Psoas muscle (tissue), 8 donors: ENCODE measurements at regions of chr1 and their contacts with region 1.

Region 1: DNA sequence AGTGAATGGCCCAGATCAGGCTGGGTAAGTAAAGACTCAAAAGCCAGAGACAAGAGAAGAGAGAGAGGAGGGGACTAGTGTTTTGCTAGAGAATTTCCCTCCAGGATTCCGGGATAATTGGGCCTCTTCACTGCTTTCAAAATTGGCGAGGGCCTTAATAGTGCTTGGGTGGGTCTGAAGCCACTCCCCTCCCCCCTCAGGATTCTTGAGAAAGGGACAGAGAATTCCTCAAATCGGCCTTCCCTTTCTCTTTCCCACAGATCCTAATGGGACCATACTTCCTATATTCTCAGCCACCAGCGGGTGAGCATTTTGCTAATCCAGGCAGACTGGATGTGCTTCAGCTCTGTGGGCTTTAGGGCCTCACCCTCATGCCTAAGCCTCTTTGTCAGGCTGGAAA is 11.9 kb downstream of the SFN start:
- DNase-seq: no peak
- ATAC-seq: no peak
- H3K4me3 ChIP-seq: no peak overlapping the region
- H3K27ac ChIP-seq: no peak overlapping the region
- H3K4me1 ChIP-seq: no peaks in the 10 kb centered on the region
- H3K27me3 ChIP-seq: no peaks in the 10 kb centered on the region
- CTCF ChIP-seq: no peak

Region 2: DNA sequence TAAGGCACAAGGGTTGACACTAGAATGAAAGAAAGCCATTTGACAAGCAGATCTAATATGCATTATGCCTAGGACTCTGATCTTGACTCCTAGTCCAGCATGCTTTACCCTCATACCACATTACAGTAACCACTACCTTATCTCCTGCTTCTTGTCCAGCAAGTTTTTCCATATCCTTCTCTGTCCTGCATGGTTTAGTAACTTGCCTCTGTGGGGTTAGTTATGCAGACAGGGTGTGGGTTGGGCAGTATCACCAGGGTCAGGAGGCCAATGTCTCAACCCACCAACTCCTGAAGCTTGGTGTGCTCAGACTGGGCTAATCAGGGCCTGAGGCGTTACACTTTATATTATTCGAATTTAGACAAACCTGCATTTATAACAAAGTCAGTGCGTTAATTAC is 424.0 kb before region 1 on chr1:
- intact Hi-C with region 1: no loop called
- DNase-seq: no peak
- ATAC-seq: no peak
- H3K4me3 ChIP-seq: no peak overlapping the region
- H3K27ac ChIP-seq: no peak overlapping the region
- H3K4me1 ChIP-seq: no peaks in the 10 kb centered on the region
- H3K27me3 ChIP-seq: no peaks in the 10 kb centered on the region
- CTCF ChIP-seq: no peak

Region 3: GRCh38 chr1:26583646-26584485 is 291.0 kb before region 1 on chr1:
- intact Hi-C with region 1: no loop called
- DNase-seq: no peak
- ATAC-seq: no peak
- H3K4me3 ChIP-seq: no peak overlapping the region
- H3K27ac ChIP-seq: no peak overlapping the region
- H3K4me1 ChIP-seq: no peaks in the 10 kb centered on the region
- H3K27me3 ChIP-seq: no peaks in the 10 kb centered on the region
- CTCF ChIP-seq: no peak

Region 4: GRCh38 chr1:26602378-26602959 is 272.4 kb before region 1 on chr1:
- intact Hi-C with region 1: loop called (anchors 5 kb)
- DNase-seq: no peak
- ATAC-seq: peak; percentile 54 to 83 (median 64)
- H3K4me3 ChIP-seq: no peak overlapping the region
- H3K27ac ChIP-seq: no peak overlapping the region
- H3K4me1 ChIP-seq: peaks cover 6% of the 10 kb centered on the region
- H3K27me3 ChIP-seq: no peaks in the 10 kb centered on the region
- CTCF ChIP-seq: peak; percentile 91

Region 5: GRCh38 chr1:26811057-26811456 is 63.8 kb before region 1 on chr1:
- intact Hi-C with region 1: loop called in 1 of 2 experiments (anchors 5 kb)
- DNase-seq: no peak
- ATAC-seq: no peak
- H3K4me3 ChIP-seq: no peak overlapping the region
- H3K27ac ChIP-seq: no peak overlapping the region
- H3K4me1 ChIP-seq: no peaks in the 10 kb centered on the region
- H3K27me3 ChIP-seq: no peaks in the 10 kb centered on the region
- CTCF ChIP-seq: no peak

Region 6: GRCh38 chr1:26838474-26839338 is 36.2 kb before region 1 on chr1:
- intact Hi-C with region 1: no loop called
- DNase-seq: peak in 1 of 2 donors; percentile 30
- ATAC-seq: peak in 1 of 4 donors; percentile 47
- H3K4me3 ChIP-seq: no peak overlapping the region
- H3K27ac ChIP-seq: no peak overlapping the region
- H3K4me1 ChIP-seq: no peaks in the 10 kb centered on the region
- H3K27me3 ChIP-seq: no peaks in the 10 kb centered on the region
- CTCF ChIP-seq: no peak

Region 7: DNA sequence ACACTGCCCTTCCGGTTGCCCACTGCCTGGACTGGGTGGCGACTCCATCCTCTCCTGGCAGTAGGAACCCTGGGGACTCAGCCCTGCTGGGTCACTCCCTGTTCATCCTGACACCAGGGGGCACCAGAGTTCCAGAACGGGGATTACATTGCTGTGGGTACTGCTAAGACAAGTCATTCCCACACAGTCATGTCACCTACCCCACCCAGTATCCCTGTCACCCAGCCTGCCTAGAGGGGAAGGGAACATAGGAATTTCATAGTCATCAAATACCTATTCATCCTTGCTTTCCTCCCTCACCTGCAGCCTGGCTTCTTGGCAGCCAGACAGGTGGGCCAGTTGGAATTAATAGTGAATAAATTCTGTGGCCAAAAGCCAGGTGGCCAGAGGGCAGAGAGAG is 21.7 kb before region 1 on chr1:
- intact Hi-C with region 1: loop called (anchors 1 to 2 kb)
- DNase-seq: peak; percentile 87 to 93
- ATAC-seq: peak; percentile 92 to 98 (median 96)
- H3K4me3 ChIP-seq: no peak overlapping the region
- H3K27ac ChIP-seq: peak overlapping the region; percentile 43
- H3K4me1 ChIP-seq: no peaks in the 10 kb centered on the region
- H3K27me3 ChIP-seq: no peaks in the 10 kb centered on the region
- CTCF ChIP-seq: peak; percentile 83

Region 8: GRCh38 chr1:26978901-26979300 is 104.0 kb after region 1 on chr1:
- intact Hi-C with region 1: no loop called
- DNase-seq: no peak
- ATAC-seq: no peak
- H3K4me3 ChIP-seq: no peak overlapping the region
- H3K27ac ChIP-seq: no peak overlapping the region
- H3K4me1 ChIP-seq: no peaks in the 10 kb centered on the region
- H3K27me3 ChIP-seq: peaks cover 0 to 3% (median 0%) of the 10 kb centered on the region in 3 donors
- CTCF ChIP-seq: no peak